ENCODE measurements at regions of chrX and their contacts with region 1.

Region 1: GRCh38 chrX:148850631-148851030 is 350.2 kb downstream of the AFF2 start:
- DNase-seq: no peak
- ATAC-seq: no peak
- H3K4me3 ChIP-seq: no peak overlapping the region
- H3K27ac ChIP-seq: no peak overlapping the region
- H3K4me1 ChIP-seq: no peaks in the 10 kb centered on the region
- H3K27me3 ChIP-seq: no peaks in the 10 kb centered on the region
- CTCF ChIP-seq: no peak

Region 2: GRCh38 chrX:148836741-148837140 is 13.9 kb before region 1 on chrX:
- intact Hi-C with region 1: loop called in 1 of 10 experiments (anchors 1 kb)
- DNase-seq: no peak
- ATAC-seq: no peak
- H3K4me3 ChIP-seq: no peak overlapping the region
- H3K27ac ChIP-seq: no peak overlapping the region
- H3K4me1 ChIP-seq: no peaks in the 10 kb centered on the region
- H3K27me3 ChIP-seq: peaks cover 0 to 5% (median 0%) of the 10 kb centered on the region in 7 donors
- CTCF ChIP-seq: no peak

Region 3: GRCh38 chrX:149021159-149021558 is 170.5 kb after region 1 on chrX:
- intact Hi-C with region 1: no loop called
- DNase-seq: no peak
- ATAC-seq: no peak
- H3K4me3 ChIP-seq: no peak overlapping the region
- H3K27ac ChIP-seq: no peak overlapping the region
- H3K4me1 ChIP-seq: no peaks in the 10 kb centered on the region
- H3K27me3 ChIP-seq: no peaks in the 10 kb centered on the region
- CTCF ChIP-seq: no peak